Ovary (tissue), 10 donors: ENCODE measurements at regions of chr20 and their contacts with region 1.

Region 1: GRCh38 chr20:53138454-53139262 is 166.5 kb downstream of the TSHZ2 start:
- DNase-seq: no peak
- H3K4me3 ChIP-seq: no peak overlapping the region
- H3K27ac ChIP-seq: no peak overlapping the region
- H3K4me1 ChIP-seq: peaks cover 5% of the 10 kb centered on the region
- H3K27me3 ChIP-seq: no peaks in the 10 kb centered on the region
- CTCF ChIP-seq: no peak
- EP300 ChIP-seq: no peak
- POLR2A ChIP-seq: no peak

Region 2: GRCh38 chr20:52817511-52817910 is 321.1 kb before region 1 on chr20:
- intact Hi-C with region 1: no loop called
- DNase-seq: no peak
- H3K4me3 ChIP-seq: no peak overlapping the region
- H3K27ac ChIP-seq: no peak overlapping the region
- H3K4me1 ChIP-seq: no peaks in the 10 kb centered on the region
- H3K27me3 ChIP-seq: no peaks in the 10 kb centered on the region
- CTCF ChIP-seq: no peak
- EP300 ChIP-seq: no peak
- POLR2A ChIP-seq: no peak

Region 3: GRCh38 chr20:53061192-53062108 is 77.2 kb before region 1 on chr20:
- intact Hi-C with region 1: no loop called
- DNase-seq: no peak
- H3K4me3 ChIP-seq: no peak overlapping the region
- H3K27ac ChIP-seq: no peak overlapping the region
- H3K4me1 ChIP-seq: no peaks in the 10 kb centered on the region
- H3K27me3 ChIP-seq: no peaks in the 10 kb centered on the region
- CTCF ChIP-seq: no peak
- EP300 ChIP-seq: no peak
- POLR2A ChIP-seq: no peak

Region 4: GRCh38 chr20:53097371-53097770 is 41.3 kb before region 1 on chr20:
- intact Hi-C with region 1: loop called in 1 of 4 experiments (anchors 5 kb)
- DNase-seq: no peak
- H3K4me3 ChIP-seq: no peak overlapping the region
- H3K27ac ChIP-seq: no peak overlapping the region
- H3K4me1 ChIP-seq: peaks cover 2% of the 10 kb centered on the region
- H3K27me3 ChIP-seq: no peaks in the 10 kb centered on the region
- CTCF ChIP-seq: no peak
- EP300 ChIP-seq: no peak
- POLR2A ChIP-seq: no peak

Region 5: GRCh38 chr20:53262294-53262859 is 123.7 kb after region 1 on chr20:
- intact Hi-C with region 1: no loop called
- DNase-seq: no peak
- H3K4me3 ChIP-seq: no peak overlapping the region
- H3K27ac ChIP-seq: no peak overlapping the region
- H3K4me1 ChIP-seq: peaks cover 4% of the 10 kb centered on the region
- H3K27me3 ChIP-seq: no peaks in the 10 kb centered on the region
- CTCF ChIP-seq: no peak
- EP300 ChIP-seq: no peak
- POLR2A ChIP-seq: no peak